ENCODE measurements at regions of chrX and their contacts with region 1.

Region 1: GRCh38 chrX:74232859-74233258 is 71.1 kb upstream of the ZCCHC13 start:
- DNase-seq: no peak
- H3K4me3 ChIP-seq: no peak overlapping the region
- H3K27me3 ChIP-seq: no peaks in the 10 kb centered on the region
- CTCF ChIP-seq: no peak

Region 2: DNA sequence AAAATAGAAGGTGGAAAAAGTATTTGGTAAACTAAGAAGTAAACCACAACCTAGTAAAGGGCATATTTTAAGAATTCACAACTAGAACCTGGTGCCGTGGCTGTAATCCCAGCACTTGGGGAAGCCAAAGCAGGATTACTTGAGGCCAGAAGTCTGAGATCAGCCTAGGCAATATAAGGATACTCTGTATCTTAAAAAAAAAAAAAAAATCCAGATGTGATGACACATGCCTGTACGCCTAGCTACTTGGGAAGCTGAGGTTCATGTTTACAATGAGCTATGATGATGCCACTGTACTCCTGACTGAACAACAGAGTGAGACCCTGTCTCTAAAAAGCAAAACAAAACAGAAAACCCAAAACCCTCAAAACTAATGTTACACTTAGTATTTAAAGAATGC is 223.8 kb before region 1 on chrX:
- CTCF ChIA-PET with region 1: no interaction called
- POLR2A ChIA-PET with region 1: no interaction called
- DNase-seq: no peak
- H3K4me3 ChIP-seq: no peak overlapping the region
- H3K27me3 ChIP-seq: no peaks in the 10 kb centered on the region
- CTCF ChIP-seq: no peak

Region 3: DNA sequence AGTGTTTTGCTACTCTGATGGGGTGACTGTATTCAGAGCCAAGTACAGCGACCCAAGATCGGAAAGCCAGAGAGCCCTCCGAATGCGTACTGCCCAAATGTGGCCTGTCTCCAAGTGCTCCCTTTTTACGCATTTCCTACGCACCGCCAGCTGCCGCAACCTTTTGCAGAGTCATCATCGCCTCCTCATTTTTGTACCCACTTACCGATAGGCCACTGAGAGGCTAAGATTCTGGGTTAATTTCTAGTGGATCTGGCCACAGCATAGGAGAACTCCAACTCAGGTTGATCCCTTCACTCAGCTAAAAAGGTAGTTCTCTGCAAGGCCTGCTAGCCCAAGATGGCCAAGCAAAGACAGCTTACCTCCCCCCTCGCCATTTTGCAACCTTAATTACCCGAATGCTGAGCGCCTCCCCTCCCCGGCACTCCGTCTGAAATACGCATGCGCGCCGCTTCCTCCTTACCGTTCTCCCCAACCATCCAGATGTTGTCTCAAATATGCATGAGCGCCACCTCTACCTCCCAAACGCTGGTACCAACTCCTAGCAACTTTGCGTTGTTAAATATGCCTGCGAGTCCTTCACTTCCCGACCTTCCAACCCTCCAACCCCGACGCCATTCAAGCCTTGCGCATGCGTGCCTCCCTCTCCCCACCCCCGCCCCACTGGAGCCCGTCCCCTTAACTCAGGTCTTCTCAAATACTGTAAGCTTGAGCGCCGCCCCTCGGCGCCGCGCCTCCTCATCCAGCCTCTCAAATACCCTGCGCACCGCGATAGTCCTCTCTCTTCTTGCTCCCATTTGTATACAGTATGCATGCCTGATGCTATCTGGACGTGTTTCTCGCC is 59.3 kb after region 1 on chrX:
- CTCF ChIA-PET with region 1: no interaction called
- POLR2A ChIA-PET with region 1: interaction called, 14 read pairs
- DNase-seq: peak; percentile 47
- H3K4me3 ChIP-seq: peak overlapping the region; percentile 67
- H3K27me3 ChIP-seq: no peaks in the 10 kb centered on the region
- CTCF ChIP-seq: peak; percentile 37; the same call in 1 of the 2 replicates